ENCODE measurements at regions of chr21 and their contacts with region 1.

Region 1: DNA sequence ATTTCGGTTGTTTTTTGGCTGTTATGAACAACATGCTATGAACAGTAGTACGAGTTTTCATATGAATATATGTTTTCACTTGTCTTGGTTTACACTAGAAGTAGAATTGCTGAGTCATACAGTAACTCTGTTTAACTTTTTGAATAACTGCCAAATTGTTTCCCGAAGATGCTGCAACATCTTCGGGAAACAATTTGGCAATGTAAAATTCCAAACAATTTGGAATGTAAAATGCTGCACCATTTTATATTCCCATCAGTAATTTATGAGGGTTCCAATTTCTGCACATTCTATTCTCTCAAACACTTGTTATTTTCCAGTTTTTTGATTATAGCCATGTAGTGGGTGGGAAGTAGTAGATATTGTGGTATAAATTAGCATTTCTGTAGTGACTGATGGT is 11.6 kb downstream of the PCBP3 start:
- DNase-seq: peak; percentile 55
- ATAC-seq: no peak
- H3K4me3 ChIP-seq: no peak overlapping the region
- H3K27ac ChIP-seq: no peak overlapping the region
- H3K4me1 ChIP-seq: no peaks in the 10 kb centered on the region; the same call in 1 of the 2 replicates
- H3K27me3 ChIP-seq: no peaks in the 10 kb centered on the region
- CTCF ChIP-seq: no peak

Region 2: GRCh38 chr21:45698493-45699184 is 43.5 kb after region 1 on chr21:
- CTCF ChIA-PET with region 1: no interaction called
- POLR2A ChIA-PET with region 1: no interaction called
- intact Hi-C with region 1: loop called (anchors 5 kb)
- DNase-seq: peak; percentile 95
- ATAC-seq: peak; percentile 86
- H3K4me3 ChIP-seq: no peak overlapping the region
- H3K27ac ChIP-seq: peak overlapping the region; percentile 49
- H3K4me1 ChIP-seq: peaks cover 15% of the 10 kb centered on the region
- H3K27me3 ChIP-seq: no peaks in the 10 kb centered on the region
- CTCF ChIP-seq: no peak

Measured in PC-3 (cell line).